ENCODE measurements at regions of chr1 and their contacts with region 1.

Region 1: GRCh38 chr1:21255278-21255942 is 34.9 kb downstream of the ECE1 start:
- DNase-seq: peak; percentile 88 to 89
- ATAC-seq: peak; percentile 78 to 90 (median 89)
- H3K4me3 ChIP-seq: no peak overlapping the region
- H3K27ac ChIP-seq: peak overlapping the region in 7 of 10 donors; percentile 9 to 66 (median 50)
- H3K4me1 ChIP-seq: peaks cover 6 to 43% (median 26%) of the 10 kb centered on the region in 9 donors
- H3K27me3 ChIP-seq: no peaks in the 10 kb centered on the region
- CTCF ChIP-seq: peak; percentile 70 to 95 (median 89)

Region 2: GRCh38 chr1:20992322-20993056 is 262.9 kb before region 1 on chr1:
- intact Hi-C with region 1: no loop called
- DNase-seq: no peak
- ATAC-seq: no peak
- H3K4me3 ChIP-seq: no peak overlapping the region
- H3K27ac ChIP-seq: peak overlapping the region in 1 of 10 donors; percentile 13
- H3K4me1 ChIP-seq: peaks cover 0 to 24% (median 10%) of the 10 kb centered on the region in 9 donors
- H3K27me3 ChIP-seq: no peaks in the 10 kb centered on the region
- CTCF ChIP-seq: no peak

Region 3: DNA sequence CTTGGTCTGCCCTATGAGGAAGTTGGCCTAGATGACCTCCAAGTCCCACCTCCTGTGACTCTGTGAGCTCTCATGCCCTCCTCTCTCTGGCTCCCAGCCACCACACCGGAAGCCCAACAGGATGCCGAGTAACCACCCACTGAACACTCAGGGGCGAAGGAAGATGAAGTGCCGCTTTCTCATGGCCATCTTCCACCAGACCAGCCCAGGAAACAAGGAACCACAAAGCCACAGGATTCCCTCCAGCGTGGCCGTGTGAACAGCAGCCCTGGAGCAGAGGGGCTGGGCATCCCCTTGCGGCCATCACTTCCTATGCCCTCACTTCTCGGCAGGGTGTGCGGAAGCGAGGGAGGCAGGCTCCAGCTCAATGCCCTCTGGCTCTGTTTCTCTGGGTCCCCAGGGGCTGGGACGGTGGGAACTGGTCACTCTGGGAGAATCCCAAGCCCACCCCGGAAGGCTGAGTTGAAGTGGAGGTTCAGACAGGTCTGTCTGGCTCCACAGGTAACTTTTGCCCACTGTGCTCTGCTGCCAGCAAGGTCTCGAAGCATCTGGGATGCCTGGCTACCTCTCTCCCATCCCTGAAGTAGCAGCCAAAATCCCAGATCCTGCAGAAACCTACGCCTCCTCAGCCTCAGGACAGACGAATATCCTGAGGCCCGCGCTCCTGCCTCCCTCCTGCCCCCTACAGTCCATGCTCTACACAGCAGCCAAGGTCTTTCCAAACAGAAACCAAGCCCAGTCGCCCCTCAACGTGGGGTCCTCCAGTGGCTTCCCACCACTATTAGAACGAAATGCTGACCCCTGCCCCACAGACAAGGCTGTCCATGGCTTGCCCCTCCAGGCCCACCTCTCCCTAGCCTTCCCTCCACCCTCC is 79.0 kb after region 1 on chr1:
- intact Hi-C with region 1: loop called in 7 of 10 experiments (anchors 2 to 5 kb)
- DNase-seq: peak; percentile 68 to 78
- ATAC-seq: peak; percentile 31 to 69 (median 53)
- H3K4me3 ChIP-seq: peak overlapping the region in 9 of 10 donors; percentile 4 to 41 (median 36)
- H3K27ac ChIP-seq: peak overlapping the region; percentile 47 to 90 (median 84)
- H3K4me1 ChIP-seq: peaks cover 42 to 97% (median 78%) of the 10 kb centered on the region in 9 donors
- H3K27me3 ChIP-seq: no peaks in the 10 kb centered on the region
- CTCF ChIP-seq: peak; percentile 60 to 90 (median 85)

Region 4: GRCh38 chr1:21344750-21345443 is 89.5 kb after region 1 on chr1:
- intact Hi-C with region 1: loop called in 5 of 10 experiments (anchors 5 kb)
- DNase-seq: no peak
- ATAC-seq: peak in 7 of 8 donors; percentile 7 to 48 (median 23)
- H3K4me3 ChIP-seq: peak overlapping the region; percentile 70 to 93 (median 78)
- H3K27ac ChIP-seq: peak overlapping the region; percentile 44 to 92 (median 88)
- H3K4me1 ChIP-seq: peaks cover 15 to 58% (median 46%) of the 10 kb centered on the region in 9 donors
- H3K27me3 ChIP-seq: peaks cover 0 to 37% (median 0%) of the 10 kb centered on the region in 7 donors
- CTCF ChIP-seq: no peak

Region 5: DNA sequence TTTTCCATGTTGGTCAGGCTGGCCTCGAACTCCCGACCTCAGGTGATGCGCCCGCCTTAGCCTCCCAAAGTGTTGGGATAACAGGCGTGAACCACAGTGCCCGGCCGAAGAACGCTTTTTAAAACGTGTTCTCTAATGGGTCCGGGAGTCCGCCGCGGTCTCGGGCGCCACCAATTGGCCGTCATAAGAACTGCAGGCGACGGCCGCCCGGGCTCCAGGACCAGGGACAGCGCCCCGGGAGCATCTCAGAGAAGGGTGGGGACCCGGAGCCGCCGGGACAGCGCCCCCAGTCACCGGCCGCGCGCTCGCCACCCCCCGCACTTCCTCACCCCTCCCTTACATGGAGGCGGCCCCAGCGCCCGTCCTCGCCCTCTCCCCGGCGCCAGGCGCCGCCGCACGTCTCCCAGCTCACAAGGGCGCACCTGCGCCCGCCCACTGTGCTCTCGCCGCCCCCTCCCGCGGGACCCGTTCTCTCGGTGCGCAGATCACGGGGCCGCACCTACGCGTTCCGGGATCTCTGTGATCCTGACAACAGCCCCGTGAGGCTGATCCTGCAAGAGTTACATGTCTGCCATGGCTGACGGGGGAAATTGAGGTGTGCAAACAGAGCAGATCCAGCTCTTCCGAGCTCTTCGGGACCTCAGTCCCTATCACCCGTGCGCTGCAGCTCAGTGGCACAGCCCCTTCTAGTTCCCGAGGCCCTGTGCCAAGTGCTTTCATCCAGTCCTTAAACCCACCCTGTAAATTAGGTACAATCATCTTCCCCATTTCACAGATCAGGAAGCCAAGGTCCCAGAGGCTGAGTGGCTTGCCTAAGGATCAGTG is 403.9 kb after region 1 on chr1:
- intact Hi-C with region 1: loop called in 3 of 10 experiments (anchors 10 kb)
- DNase-seq: peak; percentile 67 to 75
- ATAC-seq: peak; percentile 77 to 90 (median 82)
- H3K4me3 ChIP-seq: peak overlapping the region in 3 of 10 donors; percentile 8 to 35 (median 31)
- H3K27ac ChIP-seq: no peak overlapping the region
- H3K4me1 ChIP-seq: peaks cover 0 to 20% (median 5%) of the 10 kb centered on the region in 9 donors
- H3K27me3 ChIP-seq: peaks cover 0 to 20% (median 0%) of the 10 kb centered on the region in 7 donors
- CTCF ChIP-seq: peak; percentile 93 to 98 (median 95)

Region 6: DNA sequence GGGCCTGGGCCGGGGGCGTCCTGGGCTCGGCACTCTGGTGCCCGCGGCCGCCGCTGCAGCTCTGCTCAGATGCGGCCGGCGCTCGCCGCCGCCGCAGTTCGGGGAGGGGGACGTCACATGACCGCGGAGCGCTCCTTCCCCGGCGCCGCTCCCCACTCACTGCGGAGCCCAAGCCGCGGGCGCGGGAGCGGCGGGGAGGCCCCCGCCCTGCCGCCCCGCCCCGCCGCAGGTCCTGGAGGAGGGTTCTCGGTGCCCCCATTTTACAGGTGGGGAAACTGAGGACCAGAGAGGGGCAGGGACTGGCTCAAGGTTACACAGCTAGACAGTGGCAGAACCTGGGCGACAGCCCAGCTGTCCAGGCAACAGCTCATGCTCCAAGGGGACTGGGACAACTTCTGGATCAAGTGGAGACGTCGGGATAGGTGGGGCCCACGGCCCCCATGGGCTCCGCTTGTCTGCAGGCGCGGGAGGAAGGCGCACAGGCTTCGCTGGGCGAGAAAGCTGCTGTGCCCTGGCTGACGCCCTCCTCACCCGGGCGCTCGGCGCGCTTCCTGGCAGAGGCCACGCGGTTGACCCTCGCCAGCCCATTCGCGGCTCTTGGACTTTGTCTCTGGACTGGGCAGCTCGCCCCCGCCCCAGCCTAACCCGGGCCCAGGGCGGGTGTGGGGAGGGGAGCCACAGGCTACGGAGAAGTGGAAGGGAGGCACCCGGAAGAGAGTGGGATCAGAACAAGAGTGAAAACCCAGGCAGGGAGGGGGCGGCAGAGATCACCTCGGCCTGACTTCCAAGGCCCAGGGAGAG is 414.0 kb after region 1 on chr1 and contains the start of gene RAP1GAP:
- intact Hi-C with region 1: loop called in 1 of 10 experiments (anchors 10 kb)
- DNase-seq: no peak
- ATAC-seq: peak in 3 of 8 donors; percentile 5 to 21 (median 18)
- H3K4me3 ChIP-seq: peak within 1 kb of the TSS in 9 of 10 donors; percentile 8 to 48 (median 43)
- H3K27ac ChIP-seq: no peak within 1 kb of the TSS
- H3K4me1 ChIP-seq: peaks cover 18 to 68% (median 59%) of the 10 kb centered on the region in 9 donors
- H3K27me3 ChIP-seq: peaks cover 6 to 69% (median 43%) of the 10 kb centered on the region in 7 donors
- CTCF ChIP-seq: peak in 1 of 9 donors; percentile 16
- total RNA-seq, gene RAP1GAP: 2.3 to 5.6 (median 4.0) TPM